HepG2 (cell line): ENCODE measurements at regions of chr13 and their contacts with region 1.

Region 1: GRCh38 chr13:21402586-21403228 is 56.4 kb downstream of the ZDHHC20 start:
- DNase-seq: peak; percentile 67
- ATAC-seq: peak; percentile 61; the same call in 2 of the 3 replicates
- H3K4me3 ChIP-seq: no peak overlapping the region
- H3K27ac ChIP-seq: no peak overlapping the region
- H3K4me1 ChIP-seq: peaks cover 20% of the 10 kb centered on the region
- H3K27me3 ChIP-seq: no peaks in the 10 kb centered on the region
- CTCF ChIP-seq: no peak
- EP300 ChIP-seq: no peak; a peak in 1 of 4 replicates
- POLR2A ChIP-seq: no peak
- RAD21 ChIP-seq: no peak

Region 2: GRCh38 chr13:21310221-21310620 is 92.5 kb before region 1 on chr13:
- CTCF ChIA-PET with region 1: no interaction called
- POLR2A ChIA-PET with region 1: no interaction called
- in situ Hi-C with region 1: no loop called
- intact Hi-C with region 1: no loop called
- DNase-seq: no peak
- ATAC-seq: no peak
- H3K4me3 ChIP-seq: no peak overlapping the region
- H3K27ac ChIP-seq: no peak overlapping the region
- H3K4me1 ChIP-seq: peaks cover 8% of the 10 kb centered on the region
- H3K27me3 ChIP-seq: no peaks in the 10 kb centered on the region
- CTCF ChIP-seq: no peak
- EP300 ChIP-seq: no peak
- POLR2A ChIP-seq: no peak
- RAD21 ChIP-seq: no peak

Region 3: GRCh38 chr13:21458813-21459701 is 56.4 kb after region 1 on chr13 and contains the start of gene ZDHHC20:
- CTCF ChIA-PET with region 1: no interaction called
- POLR2A ChIA-PET with region 1: no interaction called
- in situ Hi-C with region 1: no loop called
- intact Hi-C with region 1: loop called (anchors 5 kb)
- DNase-seq: peak; percentile 72
- ATAC-seq: peak; percentile 94
- H3K4me3 ChIP-seq: peak within 1 kb of the TSS; percentile 98 to 100 (median 99)
- H3K27ac ChIP-seq: peak within 1 kb of the TSS; percentile 95
- H3K4me1 ChIP-seq: peaks cover 49% of the 10 kb centered on the region
- H3K27me3 ChIP-seq: no peaks in the 10 kb centered on the region; a peak in 1 of 5 replicates
- CTCF ChIP-seq: no peak
- EP300 ChIP-seq: no peak
- POLR2A ChIP-seq: peak; percentile 83 to 90
- RAD21 ChIP-seq: peak; percentile 50
- total RNA-seq, gene ZDHHC20: 58.0 and 59.9 TPM in 2 replicates